Activated T-helper 1 cell treated with anti-CD3 and anti-CD28 coated beads, Interleukin-12 subunit alpha, Interleukin-12 subunit beta, Interleukin-2, Interleukin-4 antibody, amounts not matched to agents 30 ng/mL and 10 ng/mL and 1 ng/mL, durations not matched to agents 14 hours and 24 hours and 36 hours (primary cell): ENCODE measurements at regions of chr1 and their contacts with region 1.

Region 1: DNA sequence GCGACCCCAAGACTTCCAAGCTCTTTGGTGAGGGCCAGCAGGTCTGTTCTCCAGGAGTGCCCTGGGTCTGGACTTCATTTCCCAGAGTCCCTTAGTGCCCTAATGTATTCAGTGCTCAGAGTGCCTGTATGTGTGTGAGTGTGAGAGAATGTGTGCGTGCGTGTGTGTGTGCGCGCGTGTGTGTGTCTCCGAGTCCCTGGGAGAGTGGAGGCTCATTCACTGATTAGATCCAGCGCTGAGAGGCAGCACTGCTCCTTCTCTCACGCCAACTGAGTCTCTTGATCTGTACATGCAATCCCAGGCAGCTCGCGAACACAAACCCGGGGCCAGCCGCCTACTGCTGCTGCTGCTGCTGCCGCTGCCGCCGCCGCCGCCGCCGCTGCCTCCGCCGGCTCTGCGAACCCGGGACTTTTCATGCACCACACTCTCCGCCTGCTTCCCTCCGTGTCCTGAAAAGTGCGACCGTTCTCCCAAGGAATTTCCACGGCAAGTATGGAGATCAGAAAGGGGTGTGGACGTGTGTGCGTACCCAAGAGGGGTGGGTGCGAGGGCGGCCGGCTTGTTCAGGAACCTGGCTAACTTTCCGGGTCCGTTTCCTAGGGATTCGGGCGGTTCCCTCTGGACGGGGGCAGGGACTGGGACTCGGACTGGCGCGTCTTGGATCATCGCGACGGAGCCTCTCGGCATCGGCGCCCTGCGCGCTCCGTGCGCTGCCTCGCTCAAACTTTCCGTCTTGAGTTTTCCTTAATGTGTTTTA is at the start of gene RNF220:
- DNase-seq: peak; percentile 8
- H3K4me3 Mint-ChIP-seq: peak within 1 kb of the TSS; percentile 86
- H3K27ac Mint-ChIP-seq: peak within 1 kb of the TSS; percentile 40
- H3K4me1 Mint-ChIP-seq: peaks cover 21% of the 10 kb centered on the region
- H3K27me3 Mint-ChIP-seq: peaks cover 48% of the 10 kb centered on the region
- total RNA-seq, gene RNF220: 103 and 107 TPM in 2 replicates

Region 2: GRCh38 chr1:43639976-43640789 is 765.0 kb before region 1 on chr1:
- intact Hi-C with region 1: no loop called
- DNase-seq: no peak
- H3K4me3 Mint-ChIP-seq: no peak overlapping the region
- H3K27ac Mint-ChIP-seq: no peak overlapping the region
- H3K4me1 Mint-ChIP-seq: no peaks in the 10 kb centered on the region
- H3K27me3 Mint-ChIP-seq: peaks cover 4% of the 10 kb centered on the region

Region 3: DNA sequence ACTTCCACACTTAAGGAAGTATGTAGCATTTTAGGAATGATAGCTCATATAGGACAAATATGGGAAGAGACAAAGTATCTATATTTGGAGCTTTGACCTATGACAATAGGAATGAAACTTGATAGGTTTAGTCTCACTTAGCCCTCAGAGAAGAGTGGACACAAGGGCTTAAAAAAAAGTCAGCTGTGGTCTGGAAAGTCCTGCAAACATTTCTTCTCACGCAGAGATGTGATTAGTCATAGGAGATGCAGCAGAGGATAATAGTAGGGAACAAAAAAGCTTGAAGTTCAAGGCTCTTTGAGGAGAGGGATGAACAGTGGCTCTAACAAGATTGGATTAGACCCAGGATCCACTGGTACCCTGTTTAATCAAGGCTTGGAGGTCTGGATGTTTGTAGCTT is 14.9 kb before region 1 on chr1:
- intact Hi-C with region 1: no loop called
- DNase-seq: no peak
- H3K4me3 Mint-ChIP-seq: no peak overlapping the region
- H3K27ac Mint-ChIP-seq: no peak overlapping the region
- H3K4me1 Mint-ChIP-seq: no peaks in the 10 kb centered on the region
- H3K27me3 Mint-ChIP-seq: peaks cover 11% of the 10 kb centered on the region

Region 4: GRCh38 chr1:44417351-44418021 is 12.3 kb after region 1 on chr1:
- intact Hi-C with region 1: loop called (anchors 1 kb)
- DNase-seq: no peak
- H3K4me3 Mint-ChIP-seq: no peak overlapping the region
- H3K27ac Mint-ChIP-seq: no peak overlapping the region
- H3K4me1 Mint-ChIP-seq: no peaks in the 10 kb centered on the region
- H3K27me3 Mint-ChIP-seq: peaks cover 64% of the 10 kb centered on the region